Activated T-helper 2 cell treated with anti-CD3 and anti-CD28 coated beads, Interferon-gamma antibody, Interleukin-2, Interleukin-4, amounts not matched to agents 10 μg/mL and 5 μg/mL and 100 μg/mL, durations not matched to agents 14 hours and 24 hours and 36 hours (primary cell): ENCODE measurements at regions of chr3 and their contacts with region 1.

Region 1: GRCh38 chr3:188320757-188321156 is 166.8 kb downstream of the LPP start:
- DNase-seq: no peak
- H3K4me3 Mint-ChIP-seq: no peak overlapping the region
- H3K27ac Mint-ChIP-seq: no peak overlapping the region
- H3K4me1 Mint-ChIP-seq: peaks cover 50% of the 10 kb centered on the region
- H3K27me3 Mint-ChIP-seq: peaks cover 7% of the 10 kb centered on the region

Region 2: DNA sequence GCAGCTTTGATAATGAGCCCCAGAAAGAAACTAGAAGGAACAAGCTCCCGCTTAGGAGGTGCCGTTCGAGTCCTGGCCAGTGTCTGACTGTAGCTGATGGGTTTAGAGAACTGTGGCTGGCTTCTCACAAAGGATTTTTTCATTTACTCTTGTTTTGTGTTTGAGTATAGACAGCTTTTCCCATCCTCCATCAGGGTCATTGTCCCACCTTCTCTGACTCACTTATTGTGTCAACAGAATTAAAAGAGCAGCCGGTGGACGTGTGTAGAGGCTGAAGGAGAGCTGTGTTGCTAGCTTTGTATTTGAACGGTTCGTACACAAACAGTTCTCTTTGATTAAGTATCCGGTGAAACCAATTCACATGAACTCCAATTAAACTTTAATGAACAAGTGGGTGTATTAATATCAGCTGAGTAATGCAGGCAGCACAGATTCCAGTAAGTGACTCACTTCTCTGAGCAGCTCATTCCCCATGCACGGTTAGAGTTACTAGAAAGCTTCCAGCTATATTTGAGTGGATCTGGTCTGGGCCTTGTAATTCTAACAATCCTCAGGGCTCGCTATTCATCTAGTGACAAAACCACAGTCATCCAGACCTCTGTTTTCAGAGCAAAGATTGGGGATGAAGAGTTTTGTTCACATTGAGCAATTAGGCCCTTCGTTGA is 25.8 kb before region 1 on chr3:
- intact Hi-C with region 1: loop called (anchors 1 kb)
- DNase-seq: no peak
- H3K4me3 Mint-ChIP-seq: no peak overlapping the region
- H3K27ac Mint-ChIP-seq: no peak overlapping the region
- H3K4me1 Mint-ChIP-seq: peaks cover 66% of the 10 kb centered on the region
- H3K27me3 Mint-ChIP-seq: no peaks in the 10 kb centered on the region

Region 3: DNA sequence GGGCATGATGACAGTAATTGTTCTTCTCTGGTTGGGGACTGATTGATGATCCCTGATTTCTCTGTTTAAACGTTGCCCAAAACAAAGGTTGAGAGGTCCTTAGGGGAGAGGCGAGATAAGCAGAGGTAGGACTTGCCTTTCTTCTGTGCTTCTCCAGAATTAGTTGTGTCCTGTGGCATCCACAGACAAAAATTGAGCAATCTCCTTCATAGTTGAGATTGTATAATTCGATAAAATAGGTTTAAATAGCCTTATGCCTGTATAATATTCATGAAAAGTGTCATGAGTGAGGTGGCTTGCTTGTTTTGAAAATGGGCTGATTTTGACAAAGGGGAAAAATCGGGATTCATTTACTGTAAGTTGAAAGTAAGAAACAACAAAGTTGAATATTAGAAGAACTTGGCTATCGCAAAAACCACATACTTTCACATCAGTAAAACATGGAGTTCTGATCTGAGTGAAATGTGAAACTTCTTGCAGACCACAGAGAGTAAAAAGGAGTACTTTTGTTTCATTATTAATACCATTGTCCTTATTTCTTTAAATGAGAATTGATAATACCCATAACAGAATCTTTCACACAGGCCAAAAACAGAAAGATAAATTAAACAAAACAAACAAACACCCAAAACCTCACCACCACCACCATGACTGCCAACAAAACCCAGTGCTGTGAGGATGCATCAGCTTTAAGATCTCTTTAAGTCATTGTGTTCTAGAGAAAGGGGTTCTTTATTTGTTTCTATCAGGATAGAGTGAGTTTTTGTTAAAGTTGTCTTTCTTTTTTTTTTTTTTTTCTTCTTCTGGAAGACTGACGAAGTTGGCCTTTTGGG is 11.1 kb before region 1 on chr3:
- intact Hi-C with region 1: loop called (anchors 1 kb)
- DNase-seq: peak; percentile 38
- H3K4me3 Mint-ChIP-seq: peak overlapping the region; percentile 48
- H3K27ac Mint-ChIP-seq: peak overlapping the region; percentile 79
- H3K4me1 Mint-ChIP-seq: peaks cover 25% of the 10 kb centered on the region
- H3K27me3 Mint-ChIP-seq: peaks cover under 1% of the 10 kb centered on the region

Region 4: DNA sequence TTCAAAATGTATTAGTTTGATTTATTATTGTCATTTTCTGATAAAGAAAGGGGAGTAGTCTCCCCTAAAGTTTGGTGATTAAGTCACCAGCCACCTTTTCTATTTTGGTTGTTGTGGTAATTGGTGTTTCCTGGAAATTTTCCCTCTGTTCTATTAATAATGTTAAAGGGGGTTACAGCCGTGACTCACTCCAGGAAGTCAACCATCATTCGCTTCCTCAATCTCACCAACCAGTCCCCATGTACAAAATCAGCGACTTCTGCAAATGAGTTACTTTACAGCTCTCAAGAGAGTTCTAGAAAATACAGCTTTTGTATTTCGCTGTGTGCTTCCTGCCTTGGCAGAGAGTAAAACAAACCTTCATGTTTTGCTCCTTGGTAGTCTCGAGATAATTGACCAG is 118.3 kb after region 1 on chr3:
- intact Hi-C with region 1: loop called (anchors 1 kb)
- DNase-seq: peak; percentile 15
- H3K4me3 Mint-ChIP-seq: peak overlapping the region; percentile 45
- H3K27ac Mint-ChIP-seq: peak overlapping the region; percentile 79
- H3K4me1 Mint-ChIP-seq: peaks cover 47% of the 10 kb centered on the region
- H3K27me3 Mint-ChIP-seq: no peaks in the 10 kb centered on the region

Region 5: DNA sequence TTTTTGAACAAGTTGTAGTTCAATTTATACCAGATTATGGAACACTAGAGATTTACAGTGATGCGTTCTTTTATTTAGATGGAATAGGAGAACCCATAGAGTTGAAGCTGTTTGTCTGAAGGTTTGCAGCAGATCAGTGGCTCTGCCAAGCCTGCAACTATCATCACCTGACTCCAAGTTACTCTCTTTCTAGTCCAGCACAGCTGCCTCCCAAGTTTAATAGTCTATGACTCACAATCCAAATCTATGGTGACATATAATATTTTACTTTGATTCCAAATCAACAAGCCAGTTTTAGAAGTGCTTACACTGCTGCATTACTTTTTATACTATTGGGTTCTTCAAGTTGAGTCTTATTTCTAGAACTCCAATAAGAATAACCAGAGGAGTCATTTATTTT is 233.6 kb after region 1 on chr3:
- intact Hi-C with region 1: loop called (anchors 10 kb)
- DNase-seq: no peak
- H3K4me3 Mint-ChIP-seq: no peak overlapping the region
- H3K27ac Mint-ChIP-seq: no peak overlapping the region
- H3K4me1 Mint-ChIP-seq: peaks cover 35% of the 10 kb centered on the region
- H3K27me3 Mint-ChIP-seq: no peaks in the 10 kb centered on the region